Breast epithelium (tissue), 4 donors: ENCODE measurements at regions of chr18 and their contacts with region 1.

Region 1: GRCh38 chr18:72692086-72692485 is 147.9 kb upstream of the CBLN2 start:
- DNase-seq: no peak
- H3K4me3 ChIP-seq: peak overlapping the region in 2 of 3 donors; percentile 33 to 47
- H3K27ac ChIP-seq: no peak overlapping the region
- H3K4me1 ChIP-seq: no peaks in the 10 kb centered on the region
- H3K27me3 ChIP-seq: no peaks in the 10 kb centered on the region
- CTCF ChIP-seq: no peak
- POLR2A ChIP-seq: no peak

Region 2: DNA sequence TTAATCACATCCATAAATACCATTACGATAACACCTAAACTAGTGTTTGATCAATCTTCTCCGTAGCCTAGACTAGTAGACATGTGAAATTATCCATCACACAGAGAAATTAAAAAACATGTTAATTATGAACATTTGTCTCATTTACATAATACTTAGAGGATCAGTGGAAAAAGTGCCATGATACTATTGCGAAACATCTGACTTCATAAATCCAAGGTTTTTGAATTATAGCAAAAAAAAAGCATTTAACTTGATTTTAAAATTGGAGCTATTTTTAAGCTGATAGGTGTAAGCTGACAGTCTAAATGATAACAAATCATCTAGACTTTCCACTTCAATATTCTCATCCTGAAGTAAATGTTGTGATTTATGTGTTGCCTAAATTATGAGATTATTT is 199.6 kb before region 1 on chr18:
- intact Hi-C with region 1: loop called (anchors 10 kb)
- DNase-seq: no peak
- H3K4me3 ChIP-seq: no peak overlapping the region
- H3K27ac ChIP-seq: no peak overlapping the region
- H3K4me1 ChIP-seq: no peaks in the 10 kb centered on the region
- H3K27me3 ChIP-seq: no peaks in the 10 kb centered on the region
- CTCF ChIP-seq: no peak
- POLR2A ChIP-seq: no peak